Activated CD4-positive, alpha-beta memory T cell treated with anti-CD3 and anti-CD28 coated beads for 36 hours (primary cell): ENCODE measurements at regions of chr5 and their contacts with region 1.

Region 1: DNA sequence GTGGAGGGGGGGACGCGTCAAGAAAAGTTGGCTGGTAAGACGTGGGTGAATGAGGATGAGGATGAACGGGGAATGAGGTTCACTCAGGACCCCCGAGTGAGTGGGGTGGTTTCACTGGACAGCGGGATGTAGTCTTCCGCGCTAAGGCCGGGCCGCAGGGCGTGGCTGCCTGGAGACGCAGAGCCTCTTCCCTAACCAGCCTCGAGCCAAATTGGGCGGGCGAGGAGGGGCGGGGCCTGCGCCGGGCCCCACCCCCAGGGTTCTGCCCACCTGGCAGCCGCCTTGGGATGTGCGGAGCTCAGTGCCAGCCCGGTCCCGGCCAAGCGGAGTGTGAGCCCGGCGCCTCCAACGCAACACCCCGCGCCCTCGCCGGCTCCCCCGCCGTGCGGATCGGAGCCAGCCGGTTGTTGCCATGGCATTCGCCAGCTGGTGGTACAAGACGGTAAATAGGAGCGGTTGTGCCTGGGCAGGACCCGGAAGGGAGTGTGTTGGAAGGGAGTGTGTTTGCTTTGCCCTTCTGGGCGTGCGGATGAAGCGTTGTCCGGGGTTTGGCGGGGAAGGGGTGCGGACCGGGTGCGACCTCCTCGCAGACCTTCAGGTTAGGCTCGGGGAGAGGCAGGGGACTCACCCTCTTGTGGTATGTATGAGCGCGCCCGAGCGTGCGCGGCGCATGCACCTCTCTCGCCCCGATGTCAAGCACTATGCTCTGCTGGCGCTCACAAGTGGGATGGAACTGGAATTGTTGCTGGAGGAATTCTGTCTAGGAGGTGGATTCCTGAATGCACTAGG is 743 bp downstream of the CAST start:
- DNase-seq: peak; percentile 94
- H3K4me3 Mint-ChIP-seq: peak overlapping the region; percentile 99
- H3K27ac Mint-ChIP-seq: peak overlapping the region; percentile 98
- H3K4me1 Mint-ChIP-seq: peaks cover 45% of the 10 kb centered on the region
- H3K27me3 Mint-ChIP-seq: peaks cover 14% of the 10 kb centered on the region

Region 2: GRCh38 chr5:95238560-95239325 is 1424.2 kb before region 1 on chr5:
- CTCF ChIA-PET with region 1: no interaction called
- POLR2A ChIA-PET with region 1: no interaction called
- intact Hi-C with region 1: no loop called
- DNase-seq: no peak
- H3K4me3 Mint-ChIP-seq: no peak overlapping the region
- H3K27ac Mint-ChIP-seq: no peak overlapping the region
- H3K4me1 Mint-ChIP-seq: no peaks in the 10 kb centered on the region
- H3K27me3 Mint-ChIP-seq: no peaks in the 10 kb centered on the region

Region 3: GRCh38 chr5:95554647-95555548 is 1108.0 kb before region 1 on chr5 and contains the starts of genes ARSK and SKIC3:
- CTCF ChIA-PET with region 1: no interaction called
- POLR2A ChIA-PET with region 1: no interaction called
- intact Hi-C with region 1: loop called (anchors 5 kb)
- DNase-seq: peak; percentile 95
- H3K4me3 Mint-ChIP-seq: peak within 1 kb of the TSS; percentile 89
- H3K27ac Mint-ChIP-seq: peak within 1 kb of the TSS; percentile 92
- H3K4me1 Mint-ChIP-seq: peaks cover 42% of the 10 kb centered on the region
- H3K27me3 Mint-ChIP-seq: no peaks in the 10 kb centered on the region
- total RNA-seq, gene ARSK: 4.5 to 4.6 TPM
- total RNA-seq, gene SKIC3: 74.7 to 78.1 TPM

Region 4: GRCh38 chr5:95858661-95859326 is 804.1 kb before region 1 on chr5:
- CTCF ChIA-PET with region 1: no interaction called
- POLR2A ChIA-PET with region 1: no interaction called
- intact Hi-C with region 1: loop called (anchors 5 kb)
- DNase-seq: peak; percentile 97
- H3K4me3 Mint-ChIP-seq: peak overlapping the region; percentile 40
- H3K27ac Mint-ChIP-seq: peak overlapping the region; percentile 68
- H3K4me1 Mint-ChIP-seq: peaks cover 55% of the 10 kb centered on the region
- H3K27me3 Mint-ChIP-seq: no peaks in the 10 kb centered on the region

Region 5: GRCh38 chr5:96614110-96614691 is 48.7 kb before region 1 on chr5:
- CTCF ChIA-PET with region 1: interaction called, 6 read pairs
- POLR2A ChIA-PET with region 1: no interaction called
- intact Hi-C with region 1: loop called (anchors 2 kb)
- DNase-seq: peak; percentile 46
- H3K4me3 Mint-ChIP-seq: no peak overlapping the region
- H3K27ac Mint-ChIP-seq: no peak overlapping the region
- H3K4me1 Mint-ChIP-seq: peaks cover 5% of the 10 kb centered on the region
- H3K27me3 Mint-ChIP-seq: no peaks in the 10 kb centered on the region

Region 6: DNA sequence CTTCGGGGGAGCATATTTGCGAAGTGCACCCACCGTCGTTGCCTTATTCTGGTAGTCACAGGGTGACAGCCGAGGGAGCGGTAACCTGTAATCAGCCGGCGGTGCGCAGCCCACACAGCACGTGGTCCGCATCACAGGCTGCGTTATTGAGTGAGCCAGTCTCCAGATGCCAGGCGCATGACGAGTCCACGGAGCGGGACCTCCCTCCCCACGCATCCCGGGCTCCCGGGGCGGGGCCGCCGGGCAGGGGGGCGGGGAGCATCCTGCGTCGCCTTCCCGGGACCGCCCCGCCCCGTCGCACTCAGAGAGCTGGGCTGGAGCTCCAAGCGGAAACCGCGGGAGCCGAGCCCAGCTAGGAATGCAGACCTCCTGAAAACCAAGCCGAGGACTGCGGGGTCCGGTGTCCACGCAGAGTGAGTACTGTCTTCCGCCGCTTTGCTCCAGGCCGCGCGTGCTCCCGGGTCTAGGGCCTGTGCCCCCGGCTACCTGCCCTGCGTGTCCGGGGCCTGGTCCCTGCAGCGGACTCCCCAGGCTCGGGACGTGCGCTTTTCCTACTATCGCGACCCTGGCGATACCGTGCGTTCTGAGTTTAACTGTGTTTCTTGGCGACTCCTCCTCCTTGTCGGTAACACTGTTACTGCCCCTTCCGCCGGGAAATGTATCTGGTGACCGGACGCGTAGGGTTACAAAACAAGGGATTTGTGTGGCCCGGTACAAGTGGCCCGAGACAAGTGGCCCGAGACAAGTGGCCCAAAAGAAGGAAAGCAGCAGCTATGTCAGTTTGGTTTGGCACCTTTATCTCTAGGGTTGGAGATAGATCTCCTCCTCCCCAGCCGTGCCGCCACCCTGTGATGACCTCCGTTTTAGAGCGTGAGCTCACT is 39.8 kb after region 1 on chr5:
- CTCF ChIA-PET with region 1: no interaction called
- POLR2A ChIA-PET with region 1: interaction called, 21 read pairs
- intact Hi-C with region 1: loop called (anchors 1 kb)
- DNase-seq: peak; percentile 92
- H3K4me3 Mint-ChIP-seq: peak overlapping the region; percentile 84
- H3K27ac Mint-ChIP-seq: peak overlapping the region; percentile 85
- H3K4me1 Mint-ChIP-seq: peaks cover 52% of the 10 kb centered on the region
- H3K27me3 Mint-ChIP-seq: no peaks in the 10 kb centered on the region

Region 7: GRCh38 chr5:96876292-96876850 is 213.5 kb after region 1 on chr5 and contains the start of gene ERAP2:
- CTCF ChIA-PET with region 1: no interaction called
- POLR2A ChIA-PET with region 1: interaction called, 5 read pairs
- intact Hi-C with region 1: loop called (anchors 5 kb)
- DNase-seq: peak; percentile 30
- H3K4me3 Mint-ChIP-seq: peak within 1 kb of the TSS; percentile 96
- H3K27ac Mint-ChIP-seq: peak within 1 kb of the TSS; percentile 97
- H3K4me1 Mint-ChIP-seq: peaks cover 63% of the 10 kb centered on the region
- H3K27me3 Mint-ChIP-seq: no peaks in the 10 kb centered on the region
- total RNA-seq, gene ERAP2: 44.8 to 48.9 TPM

Region 8: GRCh38 chr5:97183100-97183929 is 520.4 kb after region 1 on chr5 and contains the start of gene RIOK2:
- CTCF ChIA-PET with region 1: no interaction called
- POLR2A ChIA-PET with region 1: no interaction called
- intact Hi-C with region 1: loop called (anchors 2 kb)
- DNase-seq: peak; percentile 96
- H3K4me3 Mint-ChIP-seq: peak within 1 kb of the TSS; percentile 87
- H3K27ac Mint-ChIP-seq: peak within 1 kb of the TSS; percentile 98
- H3K4me1 Mint-ChIP-seq: peaks cover 34% of the 10 kb centered on the region
- H3K27me3 Mint-ChIP-seq: no peaks in the 10 kb centered on the region
- total RNA-seq, gene RIOK2: 31.8 to 41.5 TPM